A673 (cell line): ENCODE measurements at regions of chr7 and their contacts with region 1.

Region 1: DNA sequence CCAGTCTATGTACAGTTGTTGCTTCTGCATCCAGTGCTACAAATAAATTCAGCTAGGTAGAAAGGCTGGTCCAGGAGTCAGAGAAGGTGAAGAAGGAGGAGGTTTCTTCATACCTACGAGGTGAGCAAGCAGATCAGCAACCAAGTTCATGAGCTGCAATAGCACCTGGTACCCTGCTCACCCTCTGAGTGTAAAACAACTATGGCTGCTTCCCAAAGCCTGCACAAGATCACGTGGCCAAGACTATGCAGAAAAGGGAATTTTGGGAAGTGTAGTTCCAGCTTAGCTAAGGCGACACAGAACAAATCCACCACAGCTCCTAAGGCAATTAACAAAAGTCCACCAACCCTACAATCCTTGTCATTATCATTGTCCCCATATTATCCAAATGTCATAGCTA is 95.9 kb upstream of the AUTS2 start:
- DNase-seq: no peak
- H3K4me3 ChIP-seq: no peak overlapping the region
- H3K27ac ChIP-seq: no peak overlapping the region
- H3K4me1 ChIP-seq: no peaks in the 10 kb centered on the region
- H3K27me3 ChIP-seq: no peaks in the 10 kb centered on the region
- CTCF ChIP-seq: no peak

Region 2: DNA sequence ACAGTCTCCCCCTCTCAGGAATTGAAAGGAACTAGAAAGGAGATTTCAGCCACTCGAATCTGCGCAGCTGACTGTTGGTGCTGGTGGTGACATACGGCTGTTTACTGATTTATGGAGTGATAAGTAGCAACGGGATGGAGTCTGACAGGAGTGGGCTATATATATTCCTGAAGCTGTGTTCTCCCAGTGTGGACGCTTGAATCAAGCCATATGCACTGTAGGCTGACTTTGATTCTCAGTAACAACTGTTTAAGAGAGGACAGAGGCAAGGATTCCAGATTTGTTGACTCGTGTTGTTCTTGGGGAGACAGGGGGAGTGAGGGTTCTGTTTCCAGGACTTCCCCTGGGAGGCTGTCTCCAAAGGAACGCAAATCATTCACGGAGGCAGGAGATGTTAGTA is 164.2 kb before region 1 on chr7:
- CTCF ChIA-PET with region 1: no interaction called
- POLR2A ChIA-PET with region 1: no interaction called
- intact Hi-C with region 1: no loop called
- DNase-seq: no peak
- H3K4me3 ChIP-seq: no peak overlapping the region
- H3K27ac ChIP-seq: no peak overlapping the region
- H3K4me1 ChIP-seq: no peaks in the 10 kb centered on the region
- H3K27me3 ChIP-seq: no peaks in the 10 kb centered on the region
- CTCF ChIP-seq: no peak

Region 3: GRCh38 chr7:69663911-69664832 is 161.8 kb after region 1 on chr7:
- CTCF ChIA-PET with region 1: no interaction called
- POLR2A ChIA-PET with region 1: no interaction called
- intact Hi-C with region 1: no loop called
- DNase-seq: no peak
- H3K4me3 ChIP-seq: no peak overlapping the region
- H3K27ac ChIP-seq: no peak overlapping the region
- H3K4me1 ChIP-seq: peaks cover 15% of the 10 kb centered on the region
- H3K27me3 ChIP-seq: no peaks in the 10 kb centered on the region
- CTCF ChIP-seq: no peak

Region 4: DNA sequence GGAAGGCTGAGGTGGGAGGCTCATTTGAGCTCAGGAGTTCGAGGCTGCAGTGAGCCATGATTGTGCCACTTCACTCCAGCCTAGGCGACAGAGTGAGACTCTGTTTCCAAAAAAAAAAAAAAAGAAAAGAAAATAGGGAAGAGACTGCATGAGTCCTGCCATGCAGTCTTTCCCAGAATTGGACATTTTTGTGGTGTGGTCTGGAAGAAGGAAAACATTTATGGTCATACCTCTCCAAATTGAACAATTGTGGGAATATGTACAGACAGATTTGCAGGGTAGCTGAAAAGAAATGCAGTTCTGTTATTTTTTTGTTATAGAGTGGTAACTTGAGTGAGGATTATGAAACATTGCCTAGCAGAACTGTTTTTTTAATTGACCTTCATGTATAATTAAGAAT is 294.1 kb after region 1 on chr7:
- CTCF ChIA-PET with region 1: no interaction called
- POLR2A ChIA-PET with region 1: interaction called, 10 read pairs
- intact Hi-C with region 1: no loop called
- DNase-seq: no peak
- H3K4me3 ChIP-seq: no peak overlapping the region
- H3K27ac ChIP-seq: no peak overlapping the region
- H3K4me1 ChIP-seq: peaks cover 5% of the 10 kb centered on the region
- H3K27me3 ChIP-seq: no peaks in the 10 kb centered on the region
- CTCF ChIP-seq: no peak